MCF 10A (cell line): ENCODE measurements at regions of chr14 and their contacts with region 1.

Region 1: GRCh38 chr14:85528080-85528896 is 1.7 kb upstream of the FLRT2 start:
- DNase-seq: peak; percentile 88
- H3K4me3 Mint-ChIP-seq: peak overlapping the region; percentile 86
- H3K27ac Mint-ChIP-seq: peak overlapping the region; percentile 73
- H3K4me1 Mint-ChIP-seq: peaks cover 23% of the 10 kb centered on the region
- H3K27me3 Mint-ChIP-seq: no peaks in the 10 kb centered on the region
- CTCF ChIP-seq: peak; percentile 73

Region 2: GRCh38 chr14:84806627-84807026 is 721.7 kb before region 1 on chr14:
- CTCF ChIA-PET with region 1: interaction called, 3 read pairs
- POLR2A ChIA-PET with region 1: interaction called, 5 read pairs
- intact Hi-C with region 1: loop called (anchors 10 kb)
- DNase-seq: peak; percentile 79
- H3K4me3 Mint-ChIP-seq: no peak overlapping the region
- H3K27ac Mint-ChIP-seq: peak overlapping the region; percentile 86
- H3K4me1 Mint-ChIP-seq: peaks cover 17% of the 10 kb centered on the region
- H3K27me3 Mint-ChIP-seq: no peaks in the 10 kb centered on the region
- CTCF ChIP-seq: no peak

Region 3: DNA sequence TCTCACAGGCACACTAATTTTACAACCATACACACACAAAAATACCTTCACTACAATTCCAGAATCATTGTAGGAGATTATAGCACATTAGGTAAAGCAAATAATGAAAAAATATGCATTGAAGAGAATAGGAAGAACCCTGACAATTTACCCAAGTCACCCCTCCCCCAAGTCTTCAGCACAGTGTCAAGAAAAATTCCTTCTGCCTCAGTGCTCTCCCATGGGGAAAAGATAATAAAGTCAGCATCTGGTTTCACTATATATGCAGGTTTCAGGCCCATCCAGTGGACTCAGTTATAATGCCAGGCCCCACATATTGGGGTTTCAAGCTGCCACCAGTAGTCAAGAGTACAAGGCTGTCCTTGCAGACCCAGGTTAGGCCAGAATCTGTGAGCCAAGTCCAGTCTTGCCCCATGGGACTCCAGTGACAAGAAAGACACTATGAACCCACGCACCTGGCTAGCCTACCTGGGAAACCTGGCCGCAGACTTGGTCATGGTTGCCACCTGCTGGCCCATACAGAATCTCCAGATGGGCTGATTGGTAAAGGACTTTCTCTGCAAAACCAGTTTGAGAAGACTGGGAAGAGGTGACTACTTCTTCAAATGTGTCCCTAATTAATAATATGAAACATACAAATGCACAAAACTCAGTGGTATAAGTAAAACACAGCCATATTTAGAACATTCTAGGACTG is 396.9 kb before region 1 on chr14:
- CTCF ChIA-PET with region 1: no interaction called
- POLR2A ChIA-PET with region 1: no interaction called
- intact Hi-C with region 1: loop called (anchors 1 kb)
- DNase-seq: peak; percentile 48
- H3K4me3 Mint-ChIP-seq: no peak overlapping the region
- H3K27ac Mint-ChIP-seq: no peak overlapping the region
- H3K4me1 Mint-ChIP-seq: no peaks in the 10 kb centered on the region
- H3K27me3 Mint-ChIP-seq: no peaks in the 10 kb centered on the region
- CTCF ChIP-seq: peak; percentile 53

Region 4: DNA sequence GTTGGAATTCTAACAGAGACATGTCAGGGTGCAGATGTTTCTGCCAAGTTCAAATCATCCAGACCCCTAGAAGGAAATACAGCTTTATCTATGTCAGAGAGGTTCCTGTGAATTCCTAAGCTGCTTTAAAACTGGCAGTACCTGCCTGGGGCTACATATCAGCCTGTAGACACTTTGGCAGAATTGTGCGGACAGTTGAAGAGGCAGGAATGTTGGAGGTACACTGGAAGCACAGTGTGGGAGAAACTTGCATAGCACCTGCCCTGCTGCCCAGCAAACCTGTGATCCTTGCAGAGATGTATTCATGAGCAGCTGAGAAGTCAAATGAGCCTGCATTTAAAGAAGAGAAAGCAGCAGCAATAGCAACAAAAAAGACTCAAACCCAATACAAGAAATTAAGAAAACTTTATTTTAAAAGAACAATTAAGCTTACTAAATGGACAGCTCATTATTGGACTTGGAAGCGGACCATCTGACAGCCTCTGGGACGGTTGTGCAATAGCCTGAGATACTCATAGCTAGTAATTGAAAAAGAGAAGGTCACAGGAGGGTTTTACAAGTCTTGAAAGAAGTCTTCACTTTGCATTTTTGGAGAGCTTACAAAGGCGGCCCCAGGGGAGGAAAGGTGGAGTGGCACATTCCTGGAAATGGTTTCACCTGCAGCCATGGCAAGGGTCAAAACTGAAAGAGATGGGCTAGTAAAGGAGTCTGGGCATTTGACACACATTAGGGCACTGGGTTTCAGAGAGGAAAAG is 279.2 kb before region 1 on chr14:
- CTCF ChIA-PET with region 1: interaction called, 6 read pairs
- POLR2A ChIA-PET with region 1: interaction called, 8 read pairs
- intact Hi-C with region 1: loop called (anchors 5 kb)
- DNase-seq: peak; percentile 78
- H3K4me3 Mint-ChIP-seq: peak overlapping the region; percentile 49
- H3K27ac Mint-ChIP-seq: no peak overlapping the region
- H3K4me1 Mint-ChIP-seq: peaks cover 34% of the 10 kb centered on the region
- H3K27me3 Mint-ChIP-seq: no peaks in the 10 kb centered on the region
- CTCF ChIP-seq: no peak

Region 5: GRCh38 chr14:85380881-85381280 is 147.4 kb before region 1 on chr14:
- CTCF ChIA-PET with region 1: no interaction called
- POLR2A ChIA-PET with region 1: no interaction called
- intact Hi-C with region 1: no loop called
- DNase-seq: no peak
- H3K4me3 Mint-ChIP-seq: no peak overlapping the region
- H3K27ac Mint-ChIP-seq: no peak overlapping the region
- H3K4me1 Mint-ChIP-seq: no peaks in the 10 kb centered on the region
- H3K27me3 Mint-ChIP-seq: no peaks in the 10 kb centered on the region
- CTCF ChIP-seq: no peak

Region 6: GRCh38 chr14:85437148-85437547 is 91.1 kb before region 1 on chr14:
- CTCF ChIA-PET with region 1: interaction called, 9 read pairs
- POLR2A ChIA-PET with region 1: interaction called, 26 read pairs
- intact Hi-C with region 1: no loop called
- DNase-seq: peak; percentile 85
- H3K4me3 Mint-ChIP-seq: no peak overlapping the region
- H3K27ac Mint-ChIP-seq: peak overlapping the region; percentile 66
- H3K4me1 Mint-ChIP-seq: peaks cover 25% of the 10 kb centered on the region
- H3K27me3 Mint-ChIP-seq: no peaks in the 10 kb centered on the region
- CTCF ChIP-seq: no peak

Region 7: GRCh38 chr14:85617791-85618190 is 89.5 kb after region 1 on chr14:
- CTCF ChIA-PET with region 1: interaction called, 4 read pairs
- POLR2A ChIA-PET with region 1: interaction called, 4 read pairs
- intact Hi-C with region 1: loop called (anchors 5 kb)
- DNase-seq: no peak
- H3K4me3 Mint-ChIP-seq: no peak overlapping the region
- H3K27ac Mint-ChIP-seq: no peak overlapping the region
- H3K4me1 Mint-ChIP-seq: no peaks in the 10 kb centered on the region
- H3K27me3 Mint-ChIP-seq: no peaks in the 10 kb centered on the region
- CTCF ChIP-seq: no peak

Region 8: DNA sequence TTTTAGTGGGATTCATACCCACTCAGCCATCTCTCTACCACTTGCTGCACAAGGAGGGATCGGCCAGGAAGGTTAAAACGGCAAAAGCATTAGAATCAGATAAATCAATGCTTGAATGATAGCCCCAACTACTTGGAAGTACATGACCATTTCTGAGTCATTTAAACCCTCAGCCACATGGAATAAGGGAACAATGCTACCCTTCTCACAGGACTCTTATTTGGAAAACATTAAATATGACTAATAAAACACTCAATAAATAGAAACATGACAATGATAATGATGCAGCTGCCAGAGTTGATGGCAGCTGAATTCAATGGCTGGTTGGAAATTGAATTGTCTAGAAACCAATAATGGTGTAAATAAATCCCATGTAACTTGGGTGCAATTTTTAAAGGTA is 167.0 kb after region 1 on chr14:
- CTCF ChIA-PET with region 1: no interaction called
- POLR2A ChIA-PET with region 1: no interaction called
- intact Hi-C with region 1: no loop called
- DNase-seq: no peak
- H3K4me3 Mint-ChIP-seq: no peak overlapping the region
- H3K27ac Mint-ChIP-seq: no peak overlapping the region
- H3K4me1 Mint-ChIP-seq: no peaks in the 10 kb centered on the region
- H3K27me3 Mint-ChIP-seq: no peaks in the 10 kb centered on the region
- CTCF ChIP-seq: no peak